Activated CD4-positive, alpha-beta memory T cell treated with anti-CD3 and anti-CD28 coated beads, Interleukin-2, amount 10 ng/mL, durations not matched to agents 7 days and 5 days (primary cell): ENCODE measurements at regions of chr2 and their contacts with region 1.

Region 1: GRCh38 chr2:200864176-200864976 is at the start of gene CLK1:
- DNase-seq: peak; percentile 97
- H3K4me3 Mint-ChIP-seq: peak within 1 kb of the TSS; percentile 94
- H3K27ac Mint-ChIP-seq: peak within 1 kb of the TSS; percentile 100
- H3K4me1 Mint-ChIP-seq: peaks cover 53% of the 10 kb centered on the region
- H3K27me3 Mint-ChIP-seq: no peaks in the 10 kb centered on the region
- total RNA-seq, gene CLK1: 164 to 169 TPM

Region 2: DNA sequence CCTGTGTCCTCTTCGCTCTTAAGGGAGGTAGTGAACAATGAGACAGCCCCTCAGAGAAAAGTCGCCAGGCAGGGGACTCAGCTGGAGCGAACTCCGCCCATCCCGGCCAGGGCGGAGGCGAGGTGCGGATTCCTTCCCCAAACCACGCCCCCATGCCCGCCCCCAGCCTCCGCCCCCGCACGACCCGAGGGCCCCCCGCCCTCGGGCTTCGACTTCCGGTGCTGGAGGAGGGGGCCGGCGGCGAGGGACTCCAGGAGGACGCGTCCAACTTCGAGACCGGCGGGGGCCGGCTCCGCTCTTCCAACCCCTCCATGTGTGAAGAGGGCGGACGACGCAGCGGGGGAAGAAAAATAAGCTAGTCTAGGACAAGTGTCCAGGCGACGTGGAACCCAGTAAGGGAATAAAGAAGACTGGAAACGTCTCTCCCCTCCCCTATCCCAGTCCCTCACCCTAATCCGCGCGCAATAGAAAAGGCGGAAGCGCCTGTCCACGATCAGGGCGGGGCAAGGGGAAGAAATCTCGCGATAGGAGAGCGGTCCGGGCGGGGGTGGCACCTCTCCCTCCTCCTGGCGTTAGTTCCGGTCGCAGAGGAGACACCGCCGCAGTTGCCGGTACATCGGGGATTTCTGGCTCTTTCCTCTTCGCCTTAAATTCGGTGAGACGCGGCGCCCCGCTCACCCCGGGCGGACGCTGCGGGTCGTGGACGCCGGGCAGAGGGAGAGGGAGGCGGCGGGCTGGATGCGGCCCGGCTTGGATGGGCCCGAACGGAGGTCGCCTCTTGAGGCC is 52.8 kb before region 1 on chr2 and contains the start of gene BZW1:
- CTCF ChIA-PET with region 1: interaction called, 4 read pairs
- POLR2A ChIA-PET with region 1: interaction called, 89 read pairs
- DNase-seq: peak; percentile 97
- H3K4me3 Mint-ChIP-seq: peak within 1 kb of the TSS; percentile 99
- H3K27ac Mint-ChIP-seq: peak within 1 kb of the TSS; percentile 97
- H3K4me1 Mint-ChIP-seq: peaks cover 54% of the 10 kb centered on the region
- H3K27me3 Mint-ChIP-seq: no peaks in the 10 kb centered on the region
- total RNA-seq, gene BZW1: 266 to 272 TPM

Region 3: GRCh38 chr2:200877443-200877842 is 13.1 kb after region 1 on chr2:
- CTCF ChIA-PET with region 1: interaction called, 5 read pairs
- POLR2A ChIA-PET with region 1: interaction called, 28 read pairs
- DNase-seq: no peak
- H3K4me3 Mint-ChIP-seq: no peak overlapping the region
- H3K27ac Mint-ChIP-seq: no peak overlapping the region
- H3K4me1 Mint-ChIP-seq: peaks cover 10% of the 10 kb centered on the region
- H3K27me3 Mint-ChIP-seq: no peaks in the 10 kb centered on the region

Region 4: GRCh38 chr2:200963124-200963917 is 98.9 kb after region 1 on chr2 and contains the start of gene ORC2:
- CTCF ChIA-PET with region 1: no interaction called
- POLR2A ChIA-PET with region 1: interaction called, 15 read pairs
- DNase-seq: peak; percentile 93
- H3K4me3 Mint-ChIP-seq: peak within 1 kb of the TSS; percentile 92
- H3K27ac Mint-ChIP-seq: peak within 1 kb of the TSS; percentile 86
- H3K4me1 Mint-ChIP-seq: peaks cover 72% of the 10 kb centered on the region
- H3K27me3 Mint-ChIP-seq: no peaks in the 10 kb centered on the region
- total RNA-seq, gene ORC2: 50.8 to 51.6 TPM

Region 5: GRCh38 chr2:201130524-201131186 is 266.3 kb after region 1 on chr2:
- CTCF ChIA-PET with region 1: interaction called, 3 read pairs
- POLR2A ChIA-PET with region 1: interaction called, 25 read pairs
- DNase-seq: peak; percentile 50
- H3K4me3 Mint-ChIP-seq: peak overlapping the region; percentile 83
- H3K27ac Mint-ChIP-seq: peak overlapping the region; percentile 90
- H3K4me1 Mint-ChIP-seq: peaks cover 79% of the 10 kb centered on the region
- H3K27me3 Mint-ChIP-seq: no peaks in the 10 kb centered on the region

Region 6: DNA sequence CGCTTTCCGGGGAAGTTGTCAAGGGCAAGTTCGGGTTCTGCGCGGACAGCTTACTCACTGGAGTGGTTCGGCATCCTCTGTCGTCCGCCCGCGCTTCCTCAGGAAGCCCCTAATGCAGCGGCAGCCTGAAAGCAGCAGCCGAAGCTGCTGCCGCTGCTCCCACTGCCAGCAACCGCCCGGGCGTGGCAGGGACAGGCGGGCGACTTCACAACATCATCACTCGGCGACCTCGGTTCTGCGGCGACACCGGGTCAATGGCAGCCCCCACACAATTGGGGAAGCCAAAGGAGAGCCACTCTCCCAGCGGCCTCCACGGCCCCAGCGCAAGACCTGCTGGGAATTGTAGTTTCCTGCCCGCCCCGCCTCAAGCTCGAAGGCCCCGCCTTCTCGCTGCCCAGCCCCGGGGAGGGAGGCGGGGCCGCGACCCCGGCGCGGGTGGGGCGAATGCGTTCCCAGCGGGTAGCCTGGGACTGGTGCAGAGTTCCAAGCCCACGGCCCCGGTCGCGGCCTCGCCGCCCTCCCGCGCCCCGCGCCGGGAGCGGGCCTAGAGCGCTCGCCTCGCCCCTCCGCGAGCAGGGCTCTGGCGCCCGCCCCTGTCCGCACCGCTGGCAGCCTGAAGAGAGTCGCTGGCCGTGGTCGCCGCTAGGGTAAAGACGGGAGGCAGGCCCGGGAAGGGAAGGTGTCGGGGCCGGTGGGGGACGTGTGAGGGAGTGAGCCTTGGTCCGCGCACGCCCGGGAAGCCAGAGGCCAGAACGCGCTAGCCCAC is 587.1 kb after region 1 on chr2 and contains the starts of genes STRADB and TRAK2:
- CTCF ChIA-PET with region 1: no interaction called
- POLR2A ChIA-PET with region 1: interaction called, 13 read pairs
- DNase-seq: peak; percentile 97
- H3K4me3 Mint-ChIP-seq: peak within 1 kb of the TSS; percentile 95
- H3K27ac Mint-ChIP-seq: peak within 1 kb of the TSS; percentile 96
- H3K4me1 Mint-ChIP-seq: peaks cover 53% of the 10 kb centered on the region
- H3K27me3 Mint-ChIP-seq: no peaks in the 10 kb centered on the region
- total RNA-seq, gene STRADB: 18.9 to 19.2 TPM
- total RNA-seq, gene TRAK2: 47.3 to 49.3 TPM